Ascending aorta (tissue), 2 donors: ENCODE measurements at regions of chr10 and their contacts with region 1.

Region 1: GRCh38 chr10:126210051-126210915 is 178.0 kb downstream of the ADAM12 start:
- DNase-seq: no peak
- H3K4me3 ChIP-seq: no peak overlapping the region
- H3K27ac ChIP-seq: no peak overlapping the region
- H3K4me1 ChIP-seq: no peaks in the 10 kb centered on the region
- H3K27me3 ChIP-seq: no peaks in the 10 kb centered on the region
- CTCF ChIP-seq: no peak

Region 2: GRCh38 chr10:126196281-126196680 is 14.0 kb before region 1 on chr10:
- intact Hi-C with region 1: loop called (anchors 2 kb)
- DNase-seq: no peak
- H3K4me3 ChIP-seq: no peak overlapping the region
- H3K27ac ChIP-seq: no peak overlapping the region
- H3K4me1 ChIP-seq: peaks cover 0 to 4% of the 10 kb centered on the region in 2 donors
- H3K27me3 ChIP-seq: no peaks in the 10 kb centered on the region
- CTCF ChIP-seq: no peak